ENCODE measurements at regions of chr1 and their contacts with region 1.

Region 1: DNA sequence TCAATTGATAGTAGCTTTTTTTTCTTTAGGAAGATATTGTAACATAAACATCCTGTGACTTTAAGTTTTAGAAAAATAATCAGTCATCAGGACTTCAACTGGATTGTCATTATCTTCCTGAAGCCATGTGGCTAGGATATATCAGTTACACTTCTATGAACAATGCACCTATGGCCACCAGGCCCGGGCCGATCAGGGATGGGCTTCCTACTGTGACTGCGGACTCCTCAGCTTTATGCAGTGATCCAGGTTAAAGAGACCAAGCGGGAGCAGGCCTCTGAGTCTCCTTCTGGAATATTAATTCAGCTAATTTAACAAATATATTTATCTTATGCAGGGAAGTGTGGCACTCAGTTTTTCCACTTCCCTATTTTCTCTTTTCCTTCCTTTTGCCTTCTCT is 200.6 kb downstream of the ADGRL2 start:
- DNase-seq: no peak
- ATAC-seq: no peak
- H3K4me3 ChIP-seq: no peak overlapping the region
- H3K27ac ChIP-seq: no peak overlapping the region
- H3K4me1 ChIP-seq: peaks cover 0 to 11% (median 6%) of the 10 kb centered on the region in 9 donors
- H3K27me3 ChIP-seq: no peaks in the 10 kb centered on the region
- CTCF ChIP-seq: no peak

Region 2: GRCh38 chr1:82110855-82111254 is 109.5 kb after region 1 on chr1:
- intact Hi-C with region 1: loop called in 1 of 10 experiments (anchors 10 kb)
- DNase-seq: no peak
- ATAC-seq: no peak
- H3K4me3 ChIP-seq: no peak overlapping the region
- H3K27ac ChIP-seq: no peak overlapping the region
- H3K4me1 ChIP-seq: peaks cover 0 to 12% (median 7%) of the 10 kb centered on the region in 9 donors
- H3K27me3 ChIP-seq: no peaks in the 10 kb centered on the region
- CTCF ChIP-seq: no peak

Region 3: GRCh38 chr1:82472489-82473131 is 471.3 kb after region 1 on chr1:
- intact Hi-C with region 1: no loop called
- DNase-seq: no peak
- ATAC-seq: no peak
- H3K4me3 ChIP-seq: no peak overlapping the region
- H3K27ac ChIP-seq: no peak overlapping the region
- H3K4me1 ChIP-seq: no peaks in the 10 kb centered on the region
- H3K27me3 ChIP-seq: no peaks in the 10 kb centered on the region
- CTCF ChIP-seq: no peak